ENCODE measurements at regions of chr3 and their contacts with region 1.

Region 1: GRCh38 chr3:183447206-183448001 is 19.0 kb upstream of the MCF2L2 start:
- DNase-seq: peak; percentile 90
- H3K4me3 Mint-ChIP-seq: peak overlapping the region; percentile 91
- H3K27ac Mint-ChIP-seq: peak overlapping the region; percentile 66
- H3K4me1 Mint-ChIP-seq: peaks cover 12% of the 10 kb centered on the region
- H3K27me3 Mint-ChIP-seq: no peaks in the 10 kb centered on the region

Region 2: GRCh38 chr3:182837855-182838454 is 609.4 kb before region 1 on chr3:
- CTCF ChIA-PET with region 1: no interaction called
- POLR2A ChIA-PET with region 1: no interaction called
- intact Hi-C with region 1: no loop called
- DNase-seq: no peak
- H3K4me3 Mint-ChIP-seq: no peak overlapping the region
- H3K27ac Mint-ChIP-seq: no peak overlapping the region
- H3K4me1 Mint-ChIP-seq: no peaks in the 10 kb centered on the region
- H3K27me3 Mint-ChIP-seq: no peaks in the 10 kb centered on the region

Region 3: GRCh38 chr3:183430325-183430957 is 17.0 kb before region 1 on chr3:
- CTCF ChIA-PET with region 1: no interaction called
- POLR2A ChIA-PET with region 1: interaction called, 4 read pairs
- intact Hi-C with region 1: loop called (anchors 2 kb)
- DNase-seq: peak; percentile 66
- H3K4me3 Mint-ChIP-seq: peak overlapping the region; percentile 1
- H3K27ac Mint-ChIP-seq: peak overlapping the region; percentile 43
- H3K4me1 Mint-ChIP-seq: peaks cover 53% of the 10 kb centered on the region
- H3K27me3 Mint-ChIP-seq: peaks cover 3% of the 10 kb centered on the region

Region 4: GRCh38 chr3:183435661-183436060 is 11.7 kb before region 1 on chr3:
- CTCF ChIA-PET with region 1: no interaction called
- POLR2A ChIA-PET with region 1: interaction called, 6 read pairs
- intact Hi-C with region 1: loop called (anchors 1 kb)
- DNase-seq: peak; percentile 74
- H3K4me3 Mint-ChIP-seq: no peak overlapping the region
- H3K27ac Mint-ChIP-seq: peak overlapping the region; percentile 69
- H3K4me1 Mint-ChIP-seq: peaks cover 58% of the 10 kb centered on the region
- H3K27me3 Mint-ChIP-seq: no peaks in the 10 kb centered on the region

Region 5: GRCh38 chr3:183515968-183516851 is 68.8 kb after region 1 on chr3:
- CTCF ChIA-PET with region 1: no interaction called
- POLR2A ChIA-PET with region 1: no interaction called
- intact Hi-C with region 1: no loop called
- DNase-seq: peak; percentile 73
- H3K4me3 Mint-ChIP-seq: no peak overlapping the region
- H3K27ac Mint-ChIP-seq: peak overlapping the region; percentile 87
- H3K4me1 Mint-ChIP-seq: peaks cover 75% of the 10 kb centered on the region
- H3K27me3 Mint-ChIP-seq: no peaks in the 10 kb centered on the region

Region 6: GRCh38 chr3:183555541-183556081 is 108.2 kb after region 1 on chr3 and contains the start of gene KLHL6:
- CTCF ChIA-PET with region 1: no interaction called
- POLR2A ChIA-PET with region 1: no interaction called
- intact Hi-C with region 1: no loop called
- DNase-seq: peak; percentile 90
- H3K4me3 Mint-ChIP-seq: peak within 1 kb of the TSS; percentile 100
- H3K27ac Mint-ChIP-seq: peak within 1 kb of the TSS; percentile 99
- H3K4me1 Mint-ChIP-seq: peaks cover 52% of the 10 kb centered on the region
- H3K27me3 Mint-ChIP-seq: no peaks in the 10 kb centered on the region
- total RNA-seq, gene KLHL6: 63.5 to 65.2 TPM

Measured in activated CD4-positive, alpha-beta memory T cell treated with anti-CD3 and anti-CD28 coated beads for 36 hours (primary cell).